ENCODE measurements at regions of chr11 and their contacts with region 1.

Region 1: GRCh38 chr11:115279813-115280761 is 224.1 kb downstream of the CADM1 start:
- DNase-seq: peak; percentile 91
- ATAC-seq: peak; percentile 88
- H3K4me3 ChIP-seq: peak overlapping the region; percentile 2; the same call in 1 of the 2 replicates
- H3K27ac ChIP-seq: peak overlapping the region; percentile 88
- H3K4me1 ChIP-seq: peaks cover 14% of the 10 kb centered on the region
- H3K27me3 ChIP-seq: no peaks in the 10 kb centered on the region
- CTCF ChIP-seq: no peak
- POLR2A ChIP-seq: no peak
- RAD21 ChIP-seq: no peak

Region 2: GRCh38 chr11:114929351-114930000 is 350.6 kb before region 1 on chr11:
- CTCF ChIA-PET with region 1: no interaction called
- POLR2A ChIA-PET with region 1: no interaction called
- dilution Hi-C with region 1: no loop called
- in situ Hi-C with region 1: no loop called
- intact Hi-C with region 1: no loop called
- DNase-seq: no peak
- ATAC-seq: no peak
- H3K4me3 ChIP-seq: no peak overlapping the region
- H3K27ac ChIP-seq: no peak overlapping the region
- H3K4me1 ChIP-seq: no peaks in the 10 kb centered on the region
- H3K27me3 ChIP-seq: no peaks in the 10 kb centered on the region
- CTCF ChIP-seq: no peak
- POLR2A ChIP-seq: no peak
- RAD21 ChIP-seq: no peak

Region 3: DNA sequence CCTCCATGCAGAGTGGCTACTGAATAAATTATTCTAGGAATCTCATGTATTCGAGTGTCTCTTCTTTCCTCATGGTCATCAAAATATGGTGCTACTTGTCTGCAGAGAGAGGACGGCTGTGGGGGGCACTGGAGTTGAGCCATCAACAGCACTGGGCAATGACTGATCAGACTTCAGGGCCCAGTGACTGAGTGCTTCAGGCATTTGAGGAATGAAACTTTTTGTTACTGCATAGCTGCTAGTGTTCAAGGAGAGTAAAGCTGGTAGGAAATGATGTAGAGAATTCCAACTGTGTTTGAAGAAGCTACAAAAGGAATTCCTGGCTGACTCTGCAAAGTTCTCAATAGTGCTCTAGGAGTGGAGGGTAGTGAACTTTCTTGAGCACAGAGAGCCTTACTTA is 53.5 kb before region 1 on chr11:
- CTCF ChIA-PET with region 1: no interaction called
- POLR2A ChIA-PET with region 1: no interaction called
- dilution Hi-C with region 1: no loop called
- in situ Hi-C with region 1: no loop called
- intact Hi-C with region 1: loop called (anchors 5 kb)
- DNase-seq: peak; percentile 84
- ATAC-seq: peak; percentile 91
- H3K4me3 ChIP-seq: no peak overlapping the region
- H3K27ac ChIP-seq: no peak overlapping the region
- H3K4me1 ChIP-seq: peaks cover 4% of the 10 kb centered on the region
- H3K27me3 ChIP-seq: no peaks in the 10 kb centered on the region
- CTCF ChIP-seq: no peak
- POLR2A ChIP-seq: no peak
- RAD21 ChIP-seq: no peak

Region 4: DNA sequence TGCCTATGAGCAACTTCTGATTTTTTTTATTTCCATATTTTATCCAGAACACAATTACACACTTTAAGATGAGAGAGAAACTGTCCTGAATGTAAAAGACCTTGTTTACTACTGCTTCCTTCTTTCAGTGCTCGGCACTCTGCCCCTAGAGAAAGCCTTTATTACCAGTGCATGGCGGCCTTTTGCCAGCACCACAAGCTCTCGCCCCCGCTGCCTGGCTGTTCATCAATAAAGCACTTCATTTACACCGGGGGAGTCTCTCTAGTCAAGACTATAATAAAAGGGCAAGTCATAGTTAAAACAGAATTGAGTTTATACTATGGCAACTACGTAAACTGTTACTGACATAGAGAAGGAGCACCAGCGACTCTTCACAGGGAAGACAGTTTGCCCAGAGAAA is 35.3 kb before region 1 on chr11:
- CTCF ChIA-PET with region 1: no interaction called
- POLR2A ChIA-PET with region 1: no interaction called
- dilution Hi-C with region 1: no loop called
- in situ Hi-C with region 1: no loop called
- intact Hi-C with region 1: loop called (anchors 2 kb)
- DNase-seq: peak; percentile 20
- ATAC-seq: peak; percentile 62
- H3K4me3 ChIP-seq: no peak overlapping the region
- H3K27ac ChIP-seq: peak overlapping the region; percentile 48; the same call in 1 of the 2 replicates
- H3K4me1 ChIP-seq: peaks cover 2% of the 10 kb centered on the region; the same call in 1 of the 2 replicates
- H3K27me3 ChIP-seq: no peaks in the 10 kb centered on the region
- CTCF ChIP-seq: no peak
- POLR2A ChIP-seq: no peak
- RAD21 ChIP-seq: no peak

Region 5: DNA sequence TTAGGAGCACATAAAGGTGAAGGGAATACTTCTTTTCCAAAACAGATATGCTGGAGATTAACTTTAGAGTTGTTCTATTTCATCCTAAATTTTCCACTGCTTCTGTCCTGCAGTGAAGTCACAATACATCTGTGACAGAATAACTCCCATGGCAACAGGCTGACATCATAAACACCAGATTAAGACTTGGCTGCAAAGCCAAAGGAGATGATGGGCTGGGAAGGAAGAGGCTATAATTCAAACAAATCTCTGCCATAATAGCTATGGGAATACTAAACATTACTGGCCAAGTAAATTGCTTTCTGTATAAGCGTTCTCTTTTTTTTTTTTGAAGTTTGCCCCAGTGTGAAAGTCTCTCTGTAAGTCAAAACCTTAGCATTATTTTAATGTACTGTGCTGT is 116.4 kb after region 1 on chr11:
- CTCF ChIA-PET with region 1: no interaction called
- POLR2A ChIA-PET with region 1: no interaction called
- dilution Hi-C with region 1: no loop called
- in situ Hi-C with region 1: no loop called
- intact Hi-C with region 1: no loop called
- DNase-seq: no peak
- ATAC-seq: no peak
- H3K4me3 ChIP-seq: no peak overlapping the region
- H3K27ac ChIP-seq: no peak overlapping the region
- H3K4me1 ChIP-seq: no peaks in the 10 kb centered on the region; the same call in 1 of the 2 replicates
- H3K27me3 ChIP-seq: no peaks in the 10 kb centered on the region
- CTCF ChIP-seq: no peak
- POLR2A ChIP-seq: no peak
- RAD21 ChIP-seq: no peak

Measured in IMR-90 (cell line).